Transverse colon (tissue), 4 donors: ENCODE measurements at regions of chr19 and their contacts with region 1.

Region 1: DNA sequence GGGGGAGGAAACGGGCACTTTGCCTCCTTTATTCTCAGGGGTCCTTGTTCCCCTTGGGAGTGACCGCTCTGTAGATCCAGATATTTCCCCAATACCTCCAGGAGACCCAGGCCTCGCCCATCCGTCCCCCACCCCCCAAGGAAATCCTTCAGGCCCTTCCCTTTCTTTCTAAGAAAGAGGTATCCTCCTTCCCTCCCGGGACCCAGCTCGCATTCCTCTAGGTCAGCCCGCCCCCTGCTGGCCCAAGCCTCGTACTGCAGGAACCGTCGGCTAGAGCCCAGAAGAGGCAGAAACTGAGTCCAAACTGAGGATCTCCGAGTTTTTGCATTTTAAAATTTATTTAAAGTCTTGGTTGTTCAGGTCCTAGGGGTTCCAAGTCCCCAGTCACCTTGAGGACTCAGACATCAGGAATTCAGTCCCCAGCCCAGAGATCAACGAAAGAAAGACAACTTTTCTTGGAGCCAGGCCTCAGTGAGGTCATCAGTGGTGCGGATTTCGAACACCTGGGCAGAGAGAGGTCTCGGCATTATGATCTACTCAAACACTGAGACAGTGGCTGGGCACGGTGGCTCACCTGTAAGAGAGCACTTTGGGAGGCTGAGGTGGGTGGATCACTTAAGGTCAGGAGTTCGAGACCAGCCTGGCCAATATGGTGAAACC is 7.5 kb upstream of the LRFN1 start:
- DNase-seq: peak; percentile 87
- H3K4me3 ChIP-seq: no peak overlapping the region
- H3K27ac ChIP-seq: no peak overlapping the region
- H3K4me1 ChIP-seq: peaks cover 0 to 5% (median 0%) of the 10 kb centered on the region in 4 donors
- H3K27me3 ChIP-seq: no peaks in the 10 kb centered on the region
- CTCF ChIP-seq: peak; percentile 94 to 98 (median 96)
- EP300 ChIP-seq: no peak
- POLR2A ChIP-seq: no peak

Region 2: DNA sequence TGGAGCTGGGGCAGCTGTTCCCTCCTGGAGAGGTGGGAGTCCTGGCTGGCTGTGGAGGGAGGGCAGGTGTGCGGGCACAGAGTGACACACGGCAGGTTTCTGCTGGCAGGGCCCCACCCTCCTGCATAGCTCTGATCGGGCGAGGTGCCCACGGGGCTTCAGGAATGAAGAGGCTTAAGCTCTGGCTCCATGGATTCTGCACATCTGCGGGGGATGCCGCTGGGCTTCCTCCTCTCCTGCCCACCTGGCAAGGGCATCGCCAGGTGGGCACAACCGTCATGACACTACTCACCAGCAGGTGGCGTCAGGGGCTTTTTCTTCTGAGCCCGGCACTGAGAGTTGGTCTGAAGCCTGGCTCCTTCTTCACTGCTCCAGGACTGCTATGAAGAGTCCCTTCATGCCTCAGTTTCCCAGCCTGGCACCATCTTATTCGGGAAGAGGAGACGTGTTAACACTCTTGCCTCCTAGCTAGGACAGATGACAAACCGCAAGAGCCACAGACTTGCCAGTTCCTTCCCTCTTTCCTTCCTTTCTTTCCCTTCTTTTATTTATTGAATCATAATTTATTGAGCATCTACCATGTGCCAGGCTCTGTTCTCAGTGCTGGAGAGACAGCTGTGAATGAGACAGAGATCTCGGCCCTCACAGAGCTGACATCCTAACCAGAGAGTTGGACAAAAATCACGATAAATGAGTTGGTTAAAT is 217.8 kb before region 1 on chr19:
- in situ Hi-C with region 1: loop called in 2 of 4 experiments (anchors 5 to 10 kb)
- intact Hi-C with region 1: no loop called
- DNase-seq: peak; percentile 73
- H3K4me3 ChIP-seq: no peak overlapping the region
- H3K27ac ChIP-seq: no peak overlapping the region
- H3K4me1 ChIP-seq: no peaks in the 10 kb centered on the region
- H3K27me3 ChIP-seq: peaks cover 37% of the 10 kb centered on the region
- CTCF ChIP-seq: peak; percentile 73 to 78 (median 76)
- EP300 ChIP-seq: no peak
- POLR2A ChIP-seq: no peak

Region 3: GRCh38 chr19:39199025-39199424 is 129.2 kb before region 1 on chr19:
- in situ Hi-C with region 1: loop called in 1 of 4 experiments (anchors 10 kb)
- intact Hi-C with region 1: no loop called
- DNase-seq: no peak
- H3K4me3 ChIP-seq: no peak overlapping the region
- H3K27ac ChIP-seq: no peak overlapping the region
- H3K4me1 ChIP-seq: peaks cover 0 to 7% (median 3%) of the 10 kb centered on the region in 4 donors
- H3K27me3 ChIP-seq: peaks cover 96% of the 10 kb centered on the region
- CTCF ChIP-seq: no peak
- EP300 ChIP-seq: no peak
- POLR2A ChIP-seq: no peak

Region 4: GRCh38 chr19:39412100-39412866 is 84.1 kb after region 1 on chr19 and contains the start of gene PLEKHG2:
- in situ Hi-C with region 1: no loop called
- intact Hi-C with region 1: no loop called
- DNase-seq: peak; percentile 97
- H3K4me3 ChIP-seq: peak within 1 kb of the TSS; percentile 48 to 86 (median 75)
- H3K27ac ChIP-seq: peak within 1 kb of the TSS; percentile 98 to 100 (median 99)
- H3K4me1 ChIP-seq: peaks cover 11 to 52% (median 40%) of the 10 kb centered on the region in 4 donors
- H3K27me3 ChIP-seq: peaks cover 17% of the 10 kb centered on the region
- CTCF ChIP-seq: peak; percentile 83 to 97 (median 91)
- EP300 ChIP-seq: no peak
- POLR2A ChIP-seq: peak; percentile 95
- total RNA-seq, gene PLEKHG2: 6.1 to 27.7 (median 11.9) TPM